ENCODE measurements at regions of chr6 and their contacts with region 1.

Region 1: DNA sequence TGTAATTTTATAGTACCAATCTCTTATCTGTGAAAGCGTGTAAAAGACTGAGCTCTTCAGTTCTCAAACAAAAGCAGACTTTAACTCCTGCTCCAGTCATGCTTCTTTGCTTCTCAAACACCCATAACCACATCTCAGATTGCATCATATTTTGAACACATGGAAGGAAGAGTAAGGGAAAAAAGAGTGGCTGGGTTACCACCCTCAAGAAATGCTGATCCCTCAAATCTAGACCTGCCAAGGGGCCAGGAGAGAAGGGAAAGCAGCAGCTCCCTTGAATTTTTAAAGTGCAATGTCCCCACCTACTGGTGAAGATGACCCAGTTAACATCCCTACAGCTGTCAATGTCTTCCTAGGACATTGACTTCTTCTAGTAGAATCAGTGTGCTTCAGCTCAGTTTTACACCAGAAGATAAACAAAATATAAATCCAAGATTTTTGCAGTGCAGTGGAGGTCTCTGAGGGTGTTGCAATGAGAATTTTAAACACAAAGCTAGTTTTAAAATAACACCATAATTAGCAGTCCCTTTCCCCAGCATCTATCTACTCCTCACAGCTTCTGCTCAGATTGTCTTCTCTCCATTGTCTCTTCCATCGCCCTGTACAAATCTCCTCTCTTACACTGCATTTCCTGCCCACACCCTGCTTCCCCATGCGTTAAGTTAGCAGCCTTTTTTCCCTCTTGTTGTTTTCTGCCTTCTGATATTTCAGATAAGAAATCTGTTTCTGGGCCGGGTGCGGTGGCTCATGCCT is 22.6 kb upstream of the HLA-DQB2 start:
- DNase-seq: peak; percentile 48 to 66
- H3K4me3 ChIP-seq: no peak overlapping the region
- H3K4me3 Mint-ChIP-seq: no peak overlapping the region
- H3K27ac Mint-ChIP-seq: no peak overlapping the region
- H3K4me1 ChIP-seq: no peaks in the 10 kb centered on the region
- H3K4me1 Mint-ChIP-seq: no peaks in the 10 kb centered on the region
- H3K27me3 ChIP-seq: no peaks in the 10 kb centered on the region
- H3K27me3 Mint-ChIP-seq: peaks cover 5% of the 10 kb centered on the region
- CTCF ChIP-seq: peak; percentile 56 to 71

Region 2: GRCh38 chr6:32413427-32414047 is 372.4 kb before region 1 on chr6:
- CTCF ChIA-PET with region 1: no interaction called
- POLR2A ChIA-PET with region 1: no interaction called
- intact Hi-C with region 1: loop called (anchors 1 kb)
- DNase-seq: peak; percentile 75 to 85
- H3K4me3 ChIP-seq: no peak overlapping the region
- H3K4me3 Mint-ChIP-seq: peak overlapping the region; percentile 33
- H3K27ac Mint-ChIP-seq: no peak overlapping the region
- H3K4me1 ChIP-seq: no peaks in the 10 kb centered on the region
- H3K4me1 Mint-ChIP-seq: peaks cover 16% of the 10 kb centered on the region
- H3K27me3 ChIP-seq: no peaks in the 10 kb centered on the region
- H3K27me3 Mint-ChIP-seq: peaks cover 15% of the 10 kb centered on the region
- CTCF ChIP-seq: peak; percentile 93 to 94

Region 3: GRCh38 chr6:32432050-32432450 is 353.9 kb before region 1 on chr6:
- CTCF ChIA-PET with region 1: no interaction called
- POLR2A ChIA-PET with region 1: no interaction called
- intact Hi-C with region 1: loop called (anchors 1 kb)
- DNase-seq: no peak
- H3K4me3 ChIP-seq: no peak overlapping the region
- H3K4me3 Mint-ChIP-seq: no peak overlapping the region
- H3K27ac Mint-ChIP-seq: no peak overlapping the region
- H3K4me1 ChIP-seq: no peaks in the 10 kb centered on the region
- H3K4me1 Mint-ChIP-seq: no peaks in the 10 kb centered on the region
- H3K27me3 ChIP-seq: no peaks in the 10 kb centered on the region
- H3K27me3 Mint-ChIP-seq: peaks cover 15% of the 10 kb centered on the region
- CTCF ChIP-seq: peak; percentile 11 to 50

Region 4: DNA sequence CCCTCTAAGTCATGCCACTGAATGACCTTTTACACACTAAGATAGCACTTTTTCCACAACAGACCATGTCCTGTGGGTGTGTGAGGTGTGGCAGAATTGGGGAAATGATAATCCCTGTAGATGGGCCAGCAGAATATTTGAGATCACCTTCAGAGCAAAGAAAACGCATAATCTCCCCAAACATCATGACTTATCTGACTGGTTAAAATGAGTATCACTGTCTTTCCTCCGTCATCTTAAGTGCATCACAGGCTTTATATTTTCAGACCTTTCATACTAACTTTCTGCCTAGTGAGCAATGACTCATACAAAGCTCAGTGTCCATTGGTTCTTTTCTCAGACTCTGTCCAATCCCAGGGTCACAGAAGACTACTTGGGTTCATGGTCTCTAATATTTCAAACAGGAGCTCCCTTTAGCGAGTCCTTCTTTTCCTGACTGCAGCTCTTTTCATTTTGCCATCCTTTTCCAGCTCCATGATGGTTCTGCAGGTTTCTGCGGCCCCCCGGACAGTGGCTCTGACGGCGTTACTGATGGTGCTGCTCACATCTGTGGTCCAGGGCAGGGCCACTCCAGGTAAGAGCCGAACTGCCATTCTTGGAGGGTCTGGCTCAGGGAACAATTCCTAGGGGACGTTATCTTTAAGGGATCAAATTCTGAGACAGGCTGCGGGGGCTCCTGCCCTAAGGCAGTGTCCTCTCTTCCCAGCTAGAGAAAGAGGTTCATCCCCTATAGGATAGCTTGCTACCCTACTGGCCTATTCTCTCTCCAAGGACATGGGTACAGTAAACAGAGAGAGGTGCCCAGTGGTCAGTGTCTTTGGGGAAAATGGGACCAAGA is 289.8 kb after region 1 on chr6 and contains the start of gene HLA-DPB1:
- CTCF ChIA-PET with region 1: no interaction called
- POLR2A ChIA-PET with region 1: no interaction called
- intact Hi-C with region 1: no loop called
- DNase-seq: peak in 1 of 2 experiments; percentile 16
- H3K4me3 ChIP-seq: no peak within 1 kb of the TSS
- H3K4me3 Mint-ChIP-seq: no peak within 1 kb of the TSS
- H3K27ac Mint-ChIP-seq: no peak within 1 kb of the TSS
- H3K4me1 ChIP-seq: no peaks in the 10 kb centered on the region
- H3K4me1 Mint-ChIP-seq: no peaks in the 10 kb centered on the region
- H3K27me3 ChIP-seq: no peaks in the 10 kb centered on the region
- H3K27me3 Mint-ChIP-seq: peaks cover 10% of the 10 kb centered on the region
- CTCF ChIP-seq: no peak
- total RNA-seq, gene HLA-DPB1: not detected in 2 replicates

Measured in Caco-2 (cell line).